ENCODE measurements at regions of chr7 and their contacts with region 1.

Region 1: GRCh38 chr7:93921607-93922566 is at the start of gene GNG11:
- DNase-seq: peak; percentile 38 to 79
- ATAC-seq: peak; percentile 89 to 94
- H3K4me3 ChIP-seq: peak within 1 kb of the TSS; percentile 74
- H3K27ac ChIP-seq: peak within 1 kb of the TSS; percentile 75 to 99
- H3K4me1 ChIP-seq: peaks cover 11% of the 10 kb centered on the region; the same call in 2 of the 3 replicates
- CTCF ChIP-seq: no peak
- EP300 ChIP-seq: 0 out of 5 replicates have a peak, but pooled peaks of 1 of the 2 experiments have one; percentile 21
- POLR2A ChIP-seq: peak; percentile 47
- RAD21 ChIP-seq: 0 out of 5 replicates have a peak, but pooled peaks of 1 of the 2 experiments have one; percentile 19
- polyA plus RNA-seq, gene GNG11: 23.4 and 31.1 TPM in 2 replicates

Region 2: DNA sequence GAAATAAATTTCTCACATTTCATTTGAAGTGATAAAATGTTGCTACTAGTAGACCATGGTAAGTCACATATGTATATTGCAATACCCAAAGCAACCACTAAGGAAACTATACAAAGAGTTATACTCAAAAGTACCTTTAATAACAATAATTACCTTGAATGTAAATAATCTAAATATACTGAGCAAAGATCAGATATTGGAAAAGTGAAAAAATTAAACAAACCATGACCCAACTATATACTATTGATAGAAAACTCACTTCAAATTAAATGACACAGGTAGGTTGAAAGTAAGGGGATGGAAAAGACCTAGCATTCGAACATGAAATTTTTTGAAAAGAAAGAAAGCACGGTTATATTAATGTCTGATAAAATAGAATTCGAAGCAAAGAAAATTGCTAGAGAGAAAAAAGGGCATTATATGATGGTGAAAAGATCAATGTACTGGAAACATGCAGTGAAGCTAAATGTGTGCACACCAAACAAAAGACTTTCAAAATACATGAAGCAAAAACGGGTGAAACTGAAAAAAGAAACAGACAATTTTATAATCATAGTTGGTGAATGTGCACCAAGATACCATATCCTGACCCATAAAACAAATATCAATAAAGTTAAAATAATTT is 60.5 kb before region 1 on chr7:
- CTCF ChIA-PET with region 1: no interaction called
- POLR2A ChIA-PET with region 1: no interaction called
- DNase-seq: no peak
- ATAC-seq: no peak
- H3K4me3 ChIP-seq: no peak overlapping the region
- H3K27ac ChIP-seq: no peak overlapping the region
- H3K4me1 ChIP-seq: no peaks in the 10 kb centered on the region
- CTCF ChIP-seq: 0 out of 3 replicates have a peak, but pooled peaks have one; percentile 4
- EP300 ChIP-seq: no peak
- POLR2A ChIP-seq: no peak
- RAD21 ChIP-seq: no peak

Region 3: DNA sequence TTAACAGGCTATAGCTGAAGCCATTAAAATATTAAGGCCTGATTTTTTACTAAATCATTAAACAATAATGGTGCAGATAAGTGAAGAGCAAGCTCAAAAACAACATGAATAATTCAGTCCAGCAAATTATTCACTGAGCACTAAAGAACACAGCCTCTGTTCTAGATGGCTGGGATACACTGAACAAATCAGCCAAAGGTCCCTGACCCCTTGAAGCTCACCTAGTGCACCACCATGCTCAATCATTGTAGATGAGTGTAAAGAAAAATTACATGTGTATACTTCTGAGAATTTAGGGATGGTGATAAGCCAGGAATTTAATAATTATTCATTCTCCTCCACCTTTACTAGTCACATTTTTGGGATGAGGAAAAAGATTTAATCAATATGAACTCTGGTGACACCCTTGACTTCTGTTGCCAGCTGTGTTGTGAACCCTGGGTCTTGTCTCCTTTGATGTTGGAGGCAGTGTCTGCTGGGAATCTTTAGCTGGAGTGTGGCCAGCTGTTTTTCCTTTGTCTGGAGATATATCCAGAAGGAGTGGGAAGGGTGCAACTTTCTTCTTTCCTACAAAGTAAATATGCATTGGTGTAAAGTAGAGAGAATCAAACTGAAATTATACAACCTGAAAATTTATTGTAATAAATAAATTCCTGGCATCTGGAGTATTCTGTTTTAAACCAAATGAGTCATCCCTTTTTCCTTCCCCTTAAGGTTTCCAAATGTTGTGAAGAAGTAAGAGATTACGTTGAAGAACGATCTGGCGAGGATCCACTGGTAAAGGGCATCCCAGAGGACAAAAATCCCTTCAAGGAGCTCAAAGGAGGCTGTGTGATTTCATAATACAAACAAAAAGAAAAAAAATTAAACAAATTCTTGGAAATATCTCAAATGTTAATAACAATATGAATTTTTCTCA is 11.6 kb before region 1 on chr7:
- CTCF ChIA-PET with region 1: interaction called, 8 read pairs
- POLR2A ChIA-PET with region 1: interaction called, 23 read pairs
- DNase-seq: peak in 1 of 2 experiments; percentile 79
- ATAC-seq: peak; percentile 61 to 63
- H3K4me3 ChIP-seq: no peak overlapping the region
- H3K27ac ChIP-seq: peak overlapping the region; percentile 67 to 88
- H3K4me1 ChIP-seq: peaks cover 76% of the 10 kb centered on the region
- CTCF ChIP-seq: no peak
- EP300 ChIP-seq: peak; percentile 83 to 89; a peak in 4 of 5 replicates
- POLR2A ChIP-seq: no peak
- RAD21 ChIP-seq: peak in 1 of 2 experiments; percentile 36; a peak in 1 of 5 replicates

Measured in A549 (cell line).